ENCODE measurements at regions of chr4 and their contacts with region 1.

Region 1: GRCh38 chr4:108570993-108571569 is 49.3 kb upstream of the RPL34 start:
- DNase-seq: no peak
- ATAC-seq: no peak

Region 2: DNA sequence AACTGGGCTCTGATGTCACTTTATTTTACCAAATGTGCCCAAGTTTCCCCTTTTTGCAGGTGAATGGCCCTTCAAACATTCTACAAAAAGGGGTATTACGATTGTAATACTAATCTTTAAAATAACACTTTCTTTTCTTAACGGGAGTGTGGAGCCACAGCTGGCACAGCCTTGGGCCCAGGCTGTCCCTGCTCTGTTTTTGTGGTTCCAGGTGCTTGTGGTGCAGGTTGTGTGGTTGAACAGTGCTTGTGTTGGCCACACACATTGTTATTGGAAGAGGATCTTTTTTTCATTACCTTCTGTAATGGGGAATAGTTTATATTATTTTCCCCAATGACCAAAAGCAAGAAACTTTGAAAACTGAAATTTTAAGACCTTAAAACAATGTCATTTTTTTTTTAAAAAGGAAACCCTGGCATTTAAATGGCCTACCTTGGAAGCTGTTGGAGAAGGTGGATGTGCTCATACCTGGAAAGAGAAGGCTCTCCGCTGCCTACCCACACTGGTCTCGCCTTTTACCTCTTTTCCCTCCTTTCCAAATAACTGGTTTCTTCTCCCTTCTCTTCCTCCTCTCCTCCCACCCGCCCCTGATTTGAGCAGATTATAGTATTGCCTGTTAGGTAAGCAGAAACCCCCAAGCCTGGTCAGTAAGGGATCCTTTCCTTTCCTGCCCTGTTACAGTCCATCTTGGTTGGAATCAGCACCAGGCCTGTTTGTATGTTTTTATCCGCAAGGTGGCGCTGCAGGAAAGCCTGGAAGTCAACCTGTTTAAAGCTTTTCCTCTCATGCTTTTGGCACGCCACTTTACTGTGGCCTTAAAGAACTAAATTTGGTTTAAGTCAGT is 552.8 kb before region 1 on chr4:
- intact Hi-C with region 1: loop called in 1 of 2 experiments (anchors 2 kb)
- DNase-seq: peak; percentile 82
- ATAC-seq: peak; percentile 82 to 83

Region 3: DNA sequence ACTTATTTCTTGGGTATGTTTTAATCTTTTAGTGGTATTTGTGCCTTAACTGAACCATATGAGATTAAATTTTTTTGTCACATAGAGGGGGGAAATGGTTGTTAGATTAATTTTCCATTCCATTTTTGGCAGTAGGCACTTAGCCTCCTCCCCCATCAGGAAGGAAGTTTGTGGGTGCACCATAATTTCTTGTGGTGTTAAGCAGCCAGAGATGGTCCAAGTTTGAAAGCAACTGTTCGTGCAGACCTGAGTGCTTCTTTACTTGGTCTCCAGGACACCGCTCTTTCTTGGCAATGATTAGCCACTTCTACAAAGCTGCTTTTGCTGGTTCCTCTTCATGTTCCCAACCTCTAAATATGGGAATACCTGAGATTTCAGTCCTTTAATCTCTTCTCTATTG is 43.4 kb before region 1 on chr4:
- intact Hi-C with region 1: no loop called
- DNase-seq: no peak
- ATAC-seq: no peak